ENCODE measurements at regions of chr2 and their contacts with region 1.

Region 1: DNA sequence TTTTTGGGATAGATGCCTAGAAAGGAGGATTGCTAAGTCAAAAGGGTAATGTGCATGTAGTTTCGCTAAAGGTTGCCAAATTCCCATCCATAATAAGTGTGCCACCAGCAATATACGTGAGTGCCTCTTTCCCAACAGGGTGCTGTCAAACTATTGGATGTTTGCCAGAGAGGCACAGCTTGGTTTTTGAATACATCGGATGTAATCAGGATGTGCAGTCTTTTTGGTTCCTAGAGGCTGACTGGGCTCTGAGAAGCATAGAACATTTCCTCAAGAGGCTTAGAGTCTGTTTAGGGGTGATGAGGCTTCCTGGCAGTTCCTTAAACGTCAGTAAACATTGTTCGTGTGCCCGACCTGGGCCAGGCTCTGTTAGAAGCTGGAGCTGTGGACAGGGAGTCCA is 28.0 kb downstream of the AGAP1 start:
- DNase-seq: no peak

Region 2: GRCh38 chr2:235541838-235542549 is 20.1 kb after region 1 on chr2:
- intact Hi-C with region 1: loop called in 1 of 2 experiments (anchors 1 kb)
- DNase-seq: no peak

Region 3: DNA sequence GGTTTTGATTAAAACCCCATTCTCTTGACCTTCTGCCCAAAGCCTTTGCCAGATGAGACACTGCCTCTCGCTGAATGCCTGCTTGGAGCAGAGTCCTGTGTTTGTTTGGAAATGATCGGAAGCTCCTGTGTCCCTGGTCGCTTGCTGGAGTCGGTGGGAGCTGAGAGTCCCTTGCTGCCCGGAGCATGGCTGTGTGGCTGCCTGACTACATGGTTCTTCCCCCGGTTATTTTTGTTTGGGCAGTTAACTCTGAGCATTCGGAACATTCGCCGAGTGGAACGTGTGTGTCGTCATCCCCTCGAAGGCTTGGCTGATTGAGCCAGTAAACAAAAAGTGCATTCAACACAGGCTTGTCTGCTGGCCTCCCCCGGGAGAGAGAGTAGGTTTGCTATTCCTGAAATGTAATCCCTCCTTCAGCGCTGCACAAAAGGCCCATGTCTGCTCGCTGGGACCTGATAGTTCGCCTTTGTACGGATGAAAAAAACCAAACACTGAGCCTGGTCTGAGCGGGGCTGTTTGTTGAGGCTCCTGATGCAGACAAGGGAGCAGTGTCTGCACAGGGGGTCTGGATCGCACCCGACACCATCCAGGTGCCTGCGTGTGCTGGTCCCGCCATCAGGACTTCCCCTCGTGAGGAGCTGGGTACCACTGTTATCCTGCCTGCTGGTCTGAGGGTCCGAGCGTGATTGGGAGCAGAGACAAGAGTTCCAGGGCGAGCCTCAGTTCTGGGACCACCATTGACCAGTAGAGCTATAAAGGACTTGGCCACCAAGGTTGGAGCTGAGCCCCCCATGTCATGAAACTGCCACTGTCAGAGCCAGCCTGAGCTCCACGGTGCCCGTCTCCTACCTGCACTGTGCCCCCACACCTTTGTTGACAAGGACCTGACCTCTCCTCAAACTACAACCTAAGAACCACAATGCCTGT is 55.8 kb after region 1 on chr2:
- intact Hi-C with region 1: no loop called
- DNase-seq: no peak

Measured in posterior vena cava (tissue), 2 donors.